Common myeloid progenitor, CD34-positive (primary cell): ENCODE measurements at regions of chr9 and their contacts with region 1.

Region 1: GRCh38 chr9:121299467-121300234 is 31.7 kb downstream of the GSN start:
- DNase-seq: peak; percentile 29 to 72 (median 56)
- H3K4me3 ChIP-seq: peak overlapping the region; percentile 49 to 83 (median 60)
- H3K27ac ChIP-seq: peak overlapping the region in 1 of 2 experiments; percentile 27
- H3K4me1 ChIP-seq: peaks cover 4 to 36% (median 31%) of the 10 kb centered on the region in 4 experiments
- H3K27me3 ChIP-seq: peaks cover 0 to 2% (median 0%) of the 10 kb centered on the region in 5 experiments

Region 2: DNA sequence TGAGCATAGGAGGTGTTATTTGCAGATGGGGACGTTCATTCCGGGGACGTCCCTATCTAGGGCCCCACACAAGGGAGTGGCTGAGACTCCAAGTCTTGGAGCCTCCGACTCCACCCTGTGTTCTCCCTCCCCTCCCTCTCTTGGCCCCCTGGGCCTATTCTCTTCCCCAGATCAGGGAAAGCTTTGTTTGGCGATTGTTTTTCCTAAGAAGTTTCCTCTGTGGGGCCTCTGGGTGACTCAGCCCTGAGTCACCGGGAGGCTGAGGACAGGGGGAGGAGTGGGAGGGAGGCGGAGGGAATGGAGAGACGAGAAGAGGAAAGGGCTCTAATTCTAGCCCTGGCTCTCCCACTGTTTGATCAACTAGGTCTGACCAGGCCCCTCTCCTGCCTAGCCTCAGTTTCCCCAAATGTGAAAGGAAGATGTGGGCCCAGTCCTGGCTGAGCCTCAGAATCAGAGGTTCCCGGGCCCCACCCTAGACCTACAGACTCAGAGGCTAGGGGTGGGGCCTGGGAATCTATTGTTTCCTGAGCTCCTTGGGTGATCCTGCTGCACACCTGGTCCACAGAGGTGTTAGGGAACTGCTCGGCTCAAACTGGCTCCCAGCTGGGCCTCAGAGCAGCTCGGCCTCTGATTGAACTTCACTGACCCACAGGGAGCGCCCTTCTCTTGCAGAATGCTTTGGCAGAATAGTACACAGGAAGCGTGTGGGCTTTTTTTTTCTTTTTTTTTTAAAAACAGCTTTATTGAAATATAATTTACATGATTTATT is 12.5 kb before region 1 on chr9:
- CTCF ChIA-PET with region 1: interaction called, 11 read pairs
- POLR2A ChIA-PET with region 1: no interaction called
- DNase-seq: peak; percentile 74 to 81 (median 81)
- H3K4me3 ChIP-seq: peak overlapping the region in 4 of 7 experiments; percentile 14 to 61 (median 34)
- H3K27ac ChIP-seq: peak overlapping the region in 1 of 2 experiments; percentile 79
- H3K4me1 ChIP-seq: peaks cover 14 to 81% (median 80%) of the 10 kb centered on the region in 4 experiments
- H3K27me3 ChIP-seq: no peaks in the 10 kb centered on the region

Region 3: GRCh38 chr9:121350993-121351561 is 51.4 kb after region 1 on chr9:
- CTCF ChIA-PET with region 1: no interaction called
- POLR2A ChIA-PET with region 1: no interaction called
- DNase-seq: peak; percentile 76 to 88 (median 88)
- H3K4me3 ChIP-seq: peak overlapping the region in 3 of 7 experiments; percentile 15 to 55 (median 32)
- H3K27ac ChIP-seq: peak overlapping the region in 1 of 2 experiments; percentile 57
- H3K4me1 ChIP-seq: peaks cover 3 to 52% (median 24%) of the 10 kb centered on the region in 4 experiments
- H3K27me3 ChIP-seq: no peaks in the 10 kb centered on the region

Region 4: DNA sequence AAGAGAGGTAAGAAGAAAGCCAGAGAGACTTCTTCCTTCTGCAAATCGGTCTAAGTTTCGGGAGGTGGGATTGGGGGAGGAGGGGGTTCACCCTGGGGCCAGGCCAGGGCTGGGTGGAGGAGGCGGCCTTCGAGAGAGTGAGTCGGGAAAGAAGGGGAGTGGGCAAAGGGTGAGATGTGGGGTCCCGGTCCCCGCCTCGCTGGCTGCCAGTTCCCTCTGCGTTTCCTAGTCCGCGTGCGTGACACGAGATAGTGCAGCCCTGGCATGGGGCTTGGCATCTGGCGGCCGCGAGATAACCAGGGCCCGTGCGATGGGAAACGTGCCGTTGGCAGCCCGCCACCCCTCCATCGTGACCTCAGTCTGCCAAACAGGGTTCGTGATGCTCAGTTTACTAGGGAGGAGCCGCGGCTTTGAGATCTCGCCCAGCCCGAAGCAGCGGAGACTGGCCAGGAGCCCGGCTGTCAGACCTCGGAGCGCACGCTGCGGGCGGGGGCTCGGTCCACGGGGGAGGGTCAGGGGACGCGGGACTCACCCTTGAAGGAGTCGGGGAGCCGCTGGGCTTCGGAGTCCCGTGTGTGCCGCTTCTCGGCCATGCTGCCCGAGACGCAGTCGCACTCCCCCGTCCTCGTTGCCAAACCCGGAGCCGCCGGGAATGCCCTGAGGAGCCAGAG is 70.1 kb after region 1 on chr9 and contains the start of gene STOM:
- CTCF ChIA-PET with region 1: no interaction called
- POLR2A ChIA-PET with region 1: no interaction called
- DNase-seq: peak; percentile 97 to 99 (median 99)
- H3K4me3 ChIP-seq: peak within 1 kb of the TSS; percentile 27 to 86 (median 71)
- H3K27ac ChIP-seq: peak within 1 kb of the TSS; percentile 96 to 98
- H3K4me1 ChIP-seq: peaks cover 35 to 81% (median 65%) of the 10 kb centered on the region in 4 experiments
- H3K27me3 ChIP-seq: no peaks in the 10 kb centered on the region